ENCODE measurements at regions of chr6 and their contacts with region 1.

Region 1: DNA sequence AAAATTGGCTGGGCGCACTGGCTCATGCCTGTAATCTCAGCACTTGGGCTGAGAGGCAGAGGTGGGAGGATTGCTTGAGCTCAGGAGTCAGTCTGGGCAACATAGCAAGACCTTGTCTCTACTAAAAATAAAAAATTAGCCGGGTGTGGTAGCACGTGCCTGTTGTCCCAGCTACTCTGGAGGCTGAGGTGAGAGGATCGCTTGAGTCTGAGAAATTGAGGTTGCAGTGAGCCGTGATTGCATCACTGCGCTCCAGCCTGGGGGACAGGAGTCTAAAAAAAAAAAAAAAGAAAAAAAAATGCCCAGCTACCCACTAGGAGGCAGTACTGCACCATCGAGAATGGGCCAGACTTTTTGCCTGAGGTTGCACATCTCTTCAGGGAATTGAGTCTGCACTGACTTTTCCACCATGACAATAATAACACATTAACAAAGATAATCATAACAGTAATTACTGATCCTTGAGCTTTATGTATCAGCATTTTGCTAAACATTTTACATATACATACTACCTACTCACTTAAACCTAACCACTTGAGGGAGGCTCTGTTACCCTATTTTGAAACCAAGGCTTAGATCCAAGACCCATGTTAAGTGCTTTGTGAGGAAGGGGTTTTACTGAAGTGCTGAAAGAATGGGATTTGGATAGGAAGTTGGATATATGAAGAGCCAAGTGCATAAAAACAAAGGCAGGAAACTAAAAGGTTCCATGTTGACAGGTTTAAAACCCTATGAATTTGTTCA is 21.0 kb downstream of the SRSF3 start:
- DNase-seq: peak; percentile 50
- H3K4me3 Mint-ChIP-seq: no peak overlapping the region
- H3K27ac Mint-ChIP-seq: peak overlapping the region; percentile 12
- H3K4me1 Mint-ChIP-seq: peaks cover 33% of the 10 kb centered on the region
- H3K27me3 Mint-ChIP-seq: no peaks in the 10 kb centered on the region

Region 2: DNA sequence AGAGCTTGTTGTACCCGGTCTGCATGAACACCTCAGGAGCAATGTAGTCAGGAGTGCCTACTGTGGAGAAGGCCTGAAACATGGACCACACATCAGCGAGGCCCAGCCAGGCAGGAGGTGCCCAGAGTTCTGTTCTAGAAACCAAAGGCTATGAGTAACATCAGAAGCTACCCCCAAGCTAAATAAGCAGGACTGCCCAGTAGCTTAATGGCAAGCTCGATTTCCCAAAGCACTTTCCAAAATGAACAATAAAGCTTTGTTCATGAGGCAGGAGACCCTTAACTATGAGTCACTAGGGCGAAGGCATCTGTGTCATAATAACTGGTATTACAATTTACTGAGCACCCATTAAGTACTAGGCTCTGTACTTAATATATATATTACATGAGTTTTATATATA is 115.3 kb before region 1 on chr6:
- CTCF ChIA-PET with region 1: no interaction called
- POLR2A ChIA-PET with region 1: no interaction called
- DNase-seq: no peak
- H3K4me3 Mint-ChIP-seq: no peak overlapping the region
- H3K27ac Mint-ChIP-seq: no peak overlapping the region
- H3K4me1 Mint-ChIP-seq: peaks cover 10% of the 10 kb centered on the region
- H3K27me3 Mint-ChIP-seq: no peaks in the 10 kb centered on the region

Region 3: DNA sequence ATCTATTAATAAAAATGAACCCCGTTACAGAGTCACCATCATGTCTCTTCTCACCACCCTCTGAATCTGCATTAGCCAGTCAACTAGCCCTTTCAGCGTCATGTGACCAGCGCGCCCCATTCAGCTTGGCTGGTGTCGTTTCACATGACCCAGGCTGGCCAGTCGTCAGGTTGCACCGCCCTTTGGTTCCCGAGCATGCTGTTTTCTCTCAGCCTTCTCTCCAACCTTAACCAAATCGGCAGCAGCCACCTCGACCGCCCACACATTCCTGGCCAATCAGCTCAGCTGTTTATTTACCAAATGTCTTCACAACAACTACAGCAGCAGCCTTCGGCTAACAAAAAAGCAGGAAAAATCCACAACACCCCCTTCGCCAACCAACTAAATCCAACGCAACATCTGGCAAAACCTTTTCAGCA is 15.4 kb before region 1 on chr6:
- CTCF ChIA-PET with region 1: interaction called, 26 read pairs
- POLR2A ChIA-PET with region 1: interaction called, 122 read pairs
- DNase-seq: peak; percentile 83
- H3K4me3 Mint-ChIP-seq: peak overlapping the region; percentile 91
- H3K27ac Mint-ChIP-seq: peak overlapping the region; percentile 78
- H3K4me1 Mint-ChIP-seq: peaks cover 75% of the 10 kb centered on the region
- H3K27me3 Mint-ChIP-seq: no peaks in the 10 kb centered on the region

Region 4: GRCh38 chr6:36631326-36632011 is 16.3 kb after region 1 on chr6:
- CTCF ChIA-PET with region 1: interaction called, 15 read pairs
- POLR2A ChIA-PET with region 1: no interaction called
- DNase-seq: no peak
- H3K4me3 Mint-ChIP-seq: no peak overlapping the region
- H3K27ac Mint-ChIP-seq: no peak overlapping the region
- H3K4me1 Mint-ChIP-seq: peaks cover 13% of the 10 kb centered on the region
- H3K27me3 Mint-ChIP-seq: no peaks in the 10 kb centered on the region

Region 5: DNA sequence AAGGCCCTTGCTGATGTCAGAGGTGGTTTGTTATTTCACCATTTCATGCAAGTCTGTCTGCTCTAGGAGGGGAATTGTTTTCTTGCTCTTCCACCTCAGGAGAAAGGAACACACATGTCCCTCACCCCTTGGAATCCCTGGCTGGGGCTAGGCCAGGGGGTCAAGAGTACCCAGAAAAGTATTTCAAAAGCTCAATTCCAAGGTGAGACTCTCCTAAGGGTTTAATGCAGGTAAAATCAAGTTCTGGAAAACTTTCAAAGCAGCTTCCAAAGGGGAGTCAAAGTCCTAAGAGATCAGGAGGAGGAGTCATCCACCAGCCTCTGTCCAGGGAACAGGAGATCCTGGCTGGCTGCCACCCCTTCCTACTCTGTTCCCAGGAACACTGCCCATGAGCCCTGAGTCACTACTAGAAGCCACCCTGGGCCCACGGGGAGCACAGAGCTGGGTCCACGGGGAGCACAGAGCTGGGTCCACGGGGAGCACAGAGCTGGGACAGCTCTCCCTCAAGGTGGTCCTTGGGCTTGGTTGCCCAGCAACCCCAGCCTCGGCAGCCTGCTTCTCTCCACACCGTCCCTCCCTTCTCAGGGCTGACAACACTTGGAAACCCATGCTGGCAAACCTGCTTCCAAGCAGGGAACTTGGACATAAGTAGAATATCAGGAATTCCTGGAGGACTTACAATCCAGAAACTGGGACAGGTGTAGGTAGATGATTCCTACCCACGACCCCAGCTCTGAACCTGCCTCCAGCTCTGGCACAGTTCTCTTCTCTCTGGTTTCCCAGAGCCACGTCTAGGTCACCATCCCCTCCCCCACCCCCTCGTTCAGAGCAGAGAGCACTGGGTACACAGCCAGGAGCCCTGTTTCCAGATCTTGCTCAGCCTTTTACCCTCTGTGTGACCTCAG is 28.0 kb after region 1 on chr6:
- CTCF ChIA-PET with region 1: interaction called, 14 read pairs
- POLR2A ChIA-PET with region 1: no interaction called
- DNase-seq: no peak
- H3K4me3 Mint-ChIP-seq: no peak overlapping the region
- H3K27ac Mint-ChIP-seq: no peak overlapping the region
- H3K4me1 Mint-ChIP-seq: no peaks in the 10 kb centered on the region
- H3K27me3 Mint-ChIP-seq: peaks cover 2% of the 10 kb centered on the region

Region 6: GRCh38 chr6:36724514-36725390 is 109.6 kb after region 1 on chr6:
- CTCF ChIA-PET with region 1: interaction called, 21 read pairs
- POLR2A ChIA-PET with region 1: no interaction called
- DNase-seq: peak; percentile 64
- H3K4me3 Mint-ChIP-seq: no peak overlapping the region
- H3K27ac Mint-ChIP-seq: no peak overlapping the region
- H3K4me1 Mint-ChIP-seq: peaks cover 35% of the 10 kb centered on the region
- H3K27me3 Mint-ChIP-seq: no peaks in the 10 kb centered on the region

Region 7: DNA sequence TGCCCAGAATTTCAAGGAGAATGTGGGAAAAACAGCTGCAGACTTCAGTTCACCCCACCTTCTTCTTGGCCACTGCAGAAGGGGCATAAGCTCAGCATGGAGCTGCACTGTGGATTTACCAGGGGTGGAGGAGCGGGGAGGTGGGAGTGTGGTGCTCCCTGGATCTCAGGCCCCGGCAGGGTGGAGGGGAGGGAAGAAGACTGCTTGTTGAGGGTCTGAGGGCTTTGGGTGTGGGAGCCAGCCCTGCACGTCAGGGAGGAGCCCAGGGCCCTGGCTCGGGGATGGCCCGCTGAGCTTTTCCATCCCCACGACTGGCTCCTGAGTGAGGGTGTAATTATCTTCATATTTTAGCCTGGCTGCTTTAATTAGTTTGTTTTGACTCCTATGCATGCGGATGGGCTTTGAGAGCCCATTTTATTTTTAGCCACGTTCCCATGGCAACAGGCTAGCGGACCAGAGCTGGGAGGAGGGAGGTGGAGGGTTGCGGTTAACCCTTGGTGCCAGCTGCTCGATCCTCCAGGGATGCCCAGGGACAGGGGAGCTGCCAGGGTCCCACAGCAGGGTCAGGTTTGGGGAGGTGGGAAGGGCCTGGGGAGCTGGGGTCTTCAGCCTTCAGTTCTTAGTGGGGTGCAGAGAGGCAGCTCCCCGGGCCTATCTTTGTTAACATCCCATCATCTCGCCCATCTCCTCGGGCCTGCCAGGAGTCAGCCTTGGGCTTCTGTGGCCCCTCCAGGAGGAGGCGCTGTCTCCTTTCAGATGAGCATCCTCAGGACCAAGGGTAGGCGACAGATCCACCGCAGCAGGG is 150.6 kb after region 1 on chr6:
- CTCF ChIA-PET with region 1: interaction called, 174 read pairs
- POLR2A ChIA-PET with region 1: interaction called, 3 read pairs
- DNase-seq: peak; percentile 87
- H3K4me3 Mint-ChIP-seq: no peak overlapping the region
- H3K27ac Mint-ChIP-seq: no peak overlapping the region
- H3K4me1 Mint-ChIP-seq: peaks cover 39% of the 10 kb centered on the region
- H3K27me3 Mint-ChIP-seq: no peaks in the 10 kb centered on the region

Measured in activated CD4-positive, alpha-beta memory T cell treated with anti-CD3 and anti-CD28 coated beads, Interleukin-2, amount 10 ng/mL, durations not matched to agents 7 days and 5 days (primary cell).